Naive thymus-derived CD8-positive, alpha-beta T cell (primary cell): ENCODE measurements at regions of chr3 and their contacts with region 1.

Region 1: DNA sequence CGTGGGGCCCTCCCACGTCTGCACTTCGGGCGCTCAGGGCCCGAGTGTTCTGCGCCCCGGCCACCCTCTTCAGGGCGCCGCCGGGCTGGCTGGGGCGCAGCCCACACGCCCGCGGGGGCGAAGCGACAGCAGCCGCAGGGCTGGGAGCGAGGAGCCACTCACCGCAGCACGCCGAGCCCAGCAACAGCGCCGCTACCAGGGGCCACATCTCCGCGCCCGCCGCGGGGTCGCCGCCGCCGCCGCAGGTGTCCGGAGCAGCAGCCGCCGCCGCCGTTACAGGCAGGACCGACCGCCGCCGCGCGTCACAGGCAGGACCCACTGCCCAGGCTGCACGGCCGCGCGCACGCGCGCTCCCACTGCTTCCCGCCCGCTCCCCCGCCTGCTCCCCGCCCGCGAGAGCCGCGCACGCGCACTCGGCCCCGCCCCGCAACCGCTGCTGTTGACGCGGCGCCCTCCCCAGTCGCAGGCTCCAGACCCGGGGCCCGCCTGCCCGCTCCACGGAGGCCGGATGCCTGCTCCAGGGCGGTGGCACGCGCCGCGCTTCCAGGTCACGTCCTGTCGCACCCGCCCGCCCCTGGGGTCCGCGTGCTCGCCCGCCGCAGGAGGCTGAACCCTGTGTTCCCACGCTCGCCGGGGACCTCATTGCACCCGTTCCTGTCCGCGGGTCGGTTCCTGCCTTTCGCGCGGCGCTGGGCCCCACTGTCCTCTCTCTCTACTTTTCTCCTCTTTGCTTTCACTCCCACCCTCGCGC is at the start of gene CD47:
- DNase-seq: peak; percentile 91 to 97 (median 97)
- ATAC-seq: peak; percentile 78 to 80
- H3K4me3 Mint-ChIP-seq: peak within 1 kb of the TSS in 9 of 10 donors; percentile 92 to 100 (median 98)
- H3K27ac Mint-ChIP-seq: peak within 1 kb of the TSS; percentile 97 to 100 (median 99)
- H3K4me1 Mint-ChIP-seq: peaks cover 29 to 38% (median 34%) of the 10 kb centered on the region in 4 donors
- H3K27me3 Mint-ChIP-seq: no peaks in the 10 kb centered on the region
- polyA plus RNA-seq, gene CD47: 127 to 164 (median 135) TPM

Region 2: GRCh38 chr3:107574650-107575049 is 516.2 kb before region 1 on chr3:
- POLR2A ChIA-PET with region 1: no interaction called
- DNase-seq: no peak
- ATAC-seq: no peak
- H3K4me3 Mint-ChIP-seq: no peak overlapping the region
- H3K27ac Mint-ChIP-seq: no peak overlapping the region
- H3K4me1 Mint-ChIP-seq: peaks cover 25 to 45% (median 40%) of the 10 kb centered on the region in 4 donors
- H3K27me3 Mint-ChIP-seq: no peaks in the 10 kb centered on the region

Region 3: DNA sequence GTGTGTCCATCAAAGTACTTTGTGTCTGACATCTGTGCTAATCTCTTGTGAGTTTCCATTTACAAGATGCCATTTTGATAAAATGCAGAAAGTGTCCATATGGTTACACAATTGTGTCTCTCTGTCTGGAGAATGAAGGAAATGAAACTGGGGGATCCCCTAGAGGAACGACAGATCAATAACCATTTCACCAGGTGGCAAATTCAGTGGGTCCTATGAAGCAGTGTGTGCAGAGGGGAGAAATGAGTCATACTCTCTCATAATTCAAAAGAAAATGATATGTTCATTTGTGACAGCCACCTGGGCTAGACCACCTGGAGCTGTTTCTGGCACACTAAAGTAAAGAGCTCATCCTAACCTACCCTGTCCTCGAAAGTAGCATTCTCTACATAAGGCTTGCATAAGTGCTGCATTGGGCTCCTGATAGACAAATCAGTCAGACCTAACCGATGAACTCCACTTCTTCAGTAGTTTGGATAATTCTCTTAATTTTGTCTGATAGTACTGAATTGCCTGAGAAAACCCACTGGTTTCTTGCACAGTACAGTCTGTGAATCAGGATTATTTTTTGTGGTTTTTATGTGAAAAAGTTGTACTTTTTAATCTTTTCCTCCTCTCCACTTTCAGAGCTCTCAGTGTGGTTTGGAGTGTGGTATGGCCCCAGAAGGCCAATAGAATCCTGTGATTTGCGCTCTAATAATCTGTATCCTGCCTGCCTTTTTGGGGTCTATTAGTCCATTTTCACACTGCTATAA is 10.2 kb after region 1 on chr3:
- POLR2A ChIA-PET with region 1: interaction called, 23 read pairs
- DNase-seq: peak in 3 of 10 donors; percentile 22 to 63 (median 28)
- ATAC-seq: peak; percentile 60 to 77
- H3K4me3 Mint-ChIP-seq: peak overlapping the region in 8 of 10 donors; percentile 5 to 63 (median 36)
- H3K27ac Mint-ChIP-seq: peak overlapping the region; percentile 32 to 93 (median 84)
- H3K4me1 Mint-ChIP-seq: peaks cover 35 to 77% (median 66%) of the 10 kb centered on the region in 4 donors
- H3K27me3 Mint-ChIP-seq: no peaks in the 10 kb centered on the region

Region 4: DNA sequence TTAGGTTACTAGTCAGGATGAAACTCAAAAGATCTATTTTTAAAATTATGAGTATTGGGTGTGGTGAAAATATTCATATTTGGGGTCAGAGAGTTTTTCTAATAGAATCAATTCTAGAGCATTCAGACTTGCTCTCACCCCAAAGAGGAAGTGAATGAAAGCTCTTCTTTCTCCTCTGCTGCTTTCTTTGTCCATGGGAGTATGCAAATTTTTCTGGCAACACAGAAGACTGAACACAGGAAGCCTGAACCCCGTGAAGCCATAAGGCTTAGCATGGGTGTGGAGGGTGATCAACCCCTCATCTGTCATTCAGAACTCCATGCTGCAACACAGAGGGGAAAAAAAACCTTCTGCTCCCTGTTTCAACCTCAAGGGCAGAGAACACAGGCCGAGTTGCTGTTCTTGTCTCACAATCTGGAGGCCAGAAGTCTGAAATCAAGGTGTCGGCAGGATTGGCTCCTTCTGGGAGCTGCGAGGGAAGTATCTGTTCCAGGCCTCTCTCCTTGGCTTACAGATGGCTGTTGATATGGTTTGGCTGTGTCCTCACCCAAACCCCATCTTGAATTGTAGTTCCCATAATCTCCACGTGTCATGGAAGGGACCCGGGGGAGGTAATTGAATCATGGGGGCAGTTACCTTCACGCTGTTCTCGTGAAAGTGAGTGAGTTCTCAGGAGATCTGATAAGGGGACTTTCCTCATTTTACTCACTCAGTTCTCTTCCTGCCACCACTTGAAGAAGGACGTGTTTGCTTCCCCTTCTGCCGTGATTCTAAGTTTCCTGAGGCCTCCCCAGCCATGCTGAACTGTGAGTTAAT is 33.7 kb after region 1 on chr3:
- POLR2A ChIA-PET with region 1: interaction called, 167 read pairs
- DNase-seq: peak; percentile 7 to 82 (median 64)
- ATAC-seq: peak; percentile 59 to 68
- H3K4me3 Mint-ChIP-seq: peak overlapping the region; percentile 73 to 98 (median 88)
- H3K27ac Mint-ChIP-seq: peak overlapping the region; percentile 95 to 100 (median 98)
- H3K4me1 Mint-ChIP-seq: peaks cover 37 to 91% (median 68%) of the 10 kb centered on the region in 4 donors
- H3K27me3 Mint-ChIP-seq: no peaks in the 10 kb centered on the region

Region 5: GRCh38 chr3:108221911-108222852 is 131.3 kb after region 1 on chr3 and contains the start of gene IFT57:
- POLR2A ChIA-PET with region 1: interaction called, 37 read pairs
- DNase-seq: peak; percentile 89 to 98 (median 96)
- ATAC-seq: peak; percentile 90
- H3K4me3 Mint-ChIP-seq: peak within 1 kb of the TSS; percentile 95 to 100 (median 99)
- H3K27ac Mint-ChIP-seq: peak within 1 kb of the TSS; percentile 99 to 100 (median 100)
- H3K4me1 Mint-ChIP-seq: peaks cover 22 to 72% (median 54%) of the 10 kb centered on the region in 4 donors
- H3K27me3 Mint-ChIP-seq: no peaks in the 10 kb centered on the region
- polyA plus RNA-seq, gene IFT57: 19.0 to 35.6 (median 27.0) TPM

Region 6: GRCh38 chr3:108292905-108293328 is 202.0 kb after region 1 on chr3:
- POLR2A ChIA-PET with region 1: no interaction called
- DNase-seq: peak in 3 of 10 donors; percentile 4 to 41 (median 39)
- ATAC-seq: peak; percentile 78 to 86
- H3K4me3 Mint-ChIP-seq: peak overlapping the region in 7 of 10 donors; percentile 17 to 69 (median 48)
- H3K27ac Mint-ChIP-seq: peak overlapping the region in 8 of 10 donors; percentile 12 to 88 (median 48)
- H3K4me1 Mint-ChIP-seq: peaks cover 17 to 38% (median 32%) of the 10 kb centered on the region in 4 donors
- H3K27me3 Mint-ChIP-seq: no peaks in the 10 kb centered on the region